ENCODE measurements at regions of chr16 and their contacts with region 1.

Region 1: DNA sequence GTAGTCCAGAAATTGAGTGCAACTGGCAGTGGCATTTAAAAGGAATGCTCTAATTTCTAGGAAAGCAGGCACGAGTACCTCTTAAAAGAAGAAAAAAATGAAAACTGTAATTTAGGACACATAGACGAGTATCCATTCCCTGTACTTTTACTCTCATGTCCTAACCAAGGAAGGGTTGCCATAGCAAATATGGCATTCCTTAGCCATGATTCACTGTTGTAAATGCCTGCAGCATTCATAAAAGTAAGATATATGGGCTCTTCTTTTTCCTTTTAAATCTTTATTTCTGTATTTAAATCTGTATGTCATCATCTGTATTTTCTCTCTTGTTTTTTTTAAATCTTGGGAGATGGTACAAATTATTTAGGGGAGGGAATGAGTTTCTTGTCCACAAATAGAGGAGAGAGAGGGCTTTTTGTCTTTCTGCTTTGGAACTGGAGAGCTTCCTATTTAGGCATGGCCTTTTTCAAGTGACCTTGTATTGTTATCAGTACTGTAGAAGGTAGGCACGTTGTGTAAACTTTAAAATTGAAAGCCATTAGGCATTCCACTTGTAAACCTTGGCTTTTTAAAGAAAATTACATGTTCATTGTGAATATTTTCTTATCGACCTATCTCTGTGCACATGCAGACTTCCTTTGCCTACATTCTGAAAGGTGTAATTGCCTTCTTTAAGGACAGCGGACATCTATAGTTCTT is 50.0 kb downstream of the TENT4B start:
- DNase-seq: no peak
- H3K4me3 Mint-ChIP-seq: no peak overlapping the region
- H3K27ac Mint-ChIP-seq: no peak overlapping the region
- H3K4me1 Mint-ChIP-seq: peaks cover 56% of the 10 kb centered on the region
- H3K27me3 Mint-ChIP-seq: no peaks in the 10 kb centered on the region

Region 2: DNA sequence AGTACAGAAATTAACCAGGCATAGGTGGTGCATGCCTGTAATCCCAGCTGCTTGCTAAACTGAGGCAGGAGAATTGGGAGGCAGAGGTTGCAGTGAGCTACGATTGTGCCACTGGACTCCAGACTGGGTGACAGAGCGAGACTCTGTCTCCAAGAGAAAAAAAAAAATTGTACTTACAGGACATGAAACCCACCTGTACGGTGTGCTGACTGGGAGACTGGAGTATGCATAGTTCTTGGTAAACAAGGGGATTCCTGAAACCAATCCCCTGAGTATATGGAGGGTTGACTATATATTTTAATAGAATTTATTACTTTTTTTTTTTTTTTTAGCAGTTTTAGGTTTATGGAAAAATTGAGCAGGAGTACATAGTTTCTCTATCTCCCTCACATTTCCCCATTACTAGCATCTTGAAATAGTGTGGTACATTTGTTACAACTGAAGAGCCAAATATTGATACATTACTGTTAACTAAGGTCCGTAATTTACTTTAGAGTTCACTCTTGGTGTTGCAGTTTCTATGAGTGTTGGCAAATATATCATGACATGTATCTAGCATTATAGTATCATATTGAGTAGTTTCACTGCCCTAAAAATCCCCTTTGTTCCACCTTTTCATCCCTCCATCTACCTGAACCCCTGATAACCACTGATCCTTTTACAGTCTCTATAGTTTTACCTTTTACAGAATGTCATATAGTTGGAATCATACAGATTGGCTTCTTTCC is 30.7 kb before region 1 on chr16:
- CTCF ChIA-PET with region 1: no interaction called
- intact Hi-C with region 1: loop called (anchors 2 kb)
- DNase-seq: no peak
- H3K4me3 Mint-ChIP-seq: no peak overlapping the region
- H3K27ac Mint-ChIP-seq: peak overlapping the region; percentile 71
- H3K4me1 Mint-ChIP-seq: peaks cover 74% of the 10 kb centered on the region
- H3K27me3 Mint-ChIP-seq: no peaks in the 10 kb centered on the region

Region 3: DNA sequence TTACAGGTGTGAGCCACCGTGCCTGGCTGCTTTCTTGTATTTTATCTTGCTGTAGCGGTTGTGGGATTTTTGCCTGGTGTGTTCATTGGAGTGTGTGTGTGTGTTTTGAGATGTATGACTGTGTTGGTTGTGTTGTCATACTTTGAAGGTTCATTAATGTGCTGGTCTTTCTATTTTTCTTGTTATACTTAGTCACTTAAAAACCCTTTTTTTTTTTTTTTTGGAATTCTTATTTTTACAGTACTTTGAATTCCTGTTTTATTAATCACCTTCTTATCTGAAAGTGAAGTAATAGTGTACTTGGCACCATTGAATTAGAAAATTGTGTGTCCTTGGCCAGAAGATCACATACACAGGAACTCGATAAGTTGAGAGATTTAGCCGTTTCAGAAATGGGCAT is 19.8 kb before region 1 on chr16:
- CTCF ChIA-PET with region 1: no interaction called
- intact Hi-C with region 1: no loop called
- DNase-seq: no peak
- H3K4me3 Mint-ChIP-seq: no peak overlapping the region
- H3K27ac Mint-ChIP-seq: no peak overlapping the region
- H3K4me1 Mint-ChIP-seq: peaks cover 49% of the 10 kb centered on the region
- H3K27me3 Mint-ChIP-seq: no peaks in the 10 kb centered on the region